Breast epithelium (tissue), 4 donors: ENCODE measurements at regions of chr2 and their contacts with region 1.

Region 1: GRCh38 chr2:239199041-239199768 is 201.6 kb downstream of the HDAC4 start:
- DNase-seq: peak in 1 of 2 donors; percentile 30
- H3K4me3 ChIP-seq: no peak overlapping the region
- H3K27ac ChIP-seq: no peak overlapping the region
- H3K4me1 ChIP-seq: no peaks in the 10 kb centered on the region
- H3K27me3 ChIP-seq: no peaks in the 10 kb centered on the region
- CTCF ChIP-seq: no peak
- POLR2A ChIP-seq: no peak

Region 2: DNA sequence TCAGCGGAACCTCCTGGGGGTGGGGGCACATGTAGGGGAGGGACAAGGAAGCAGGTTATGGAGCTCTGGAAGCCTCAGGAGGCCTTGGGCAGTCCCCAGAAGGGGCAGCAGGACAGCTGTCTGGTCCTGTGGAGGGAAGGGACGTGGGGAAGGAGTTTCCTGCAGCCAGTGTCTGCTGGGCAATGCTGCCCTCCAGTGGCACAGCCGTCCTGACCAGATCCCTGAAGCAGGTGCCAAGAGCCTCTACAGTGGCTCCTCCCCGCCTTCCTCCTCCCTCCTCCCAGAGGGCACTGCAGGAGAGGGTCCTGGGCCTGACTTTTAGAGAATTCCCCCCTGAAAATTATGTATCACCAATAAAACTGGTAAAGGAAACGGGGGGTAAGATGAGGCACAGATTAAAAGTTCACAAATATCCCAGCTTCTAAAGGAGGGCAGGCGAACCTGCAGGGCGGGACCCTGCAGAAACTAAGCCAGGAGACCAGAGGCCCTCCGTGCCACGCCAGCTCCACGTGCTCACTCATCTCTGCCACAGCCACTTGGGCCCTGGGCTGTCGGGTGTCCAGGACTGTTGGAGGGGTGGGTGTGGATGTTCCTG is 92.8 kb before region 1 on chr2:
- intact Hi-C with region 1: loop called (anchors 5 kb)
- DNase-seq: no peak
- H3K4me3 ChIP-seq: no peak overlapping the region
- H3K27ac ChIP-seq: no peak overlapping the region
- H3K4me1 ChIP-seq: no peaks in the 10 kb centered on the region
- H3K27me3 ChIP-seq: no peaks in the 10 kb centered on the region
- CTCF ChIP-seq: no peak
- POLR2A ChIP-seq: no peak

Region 3: DNA sequence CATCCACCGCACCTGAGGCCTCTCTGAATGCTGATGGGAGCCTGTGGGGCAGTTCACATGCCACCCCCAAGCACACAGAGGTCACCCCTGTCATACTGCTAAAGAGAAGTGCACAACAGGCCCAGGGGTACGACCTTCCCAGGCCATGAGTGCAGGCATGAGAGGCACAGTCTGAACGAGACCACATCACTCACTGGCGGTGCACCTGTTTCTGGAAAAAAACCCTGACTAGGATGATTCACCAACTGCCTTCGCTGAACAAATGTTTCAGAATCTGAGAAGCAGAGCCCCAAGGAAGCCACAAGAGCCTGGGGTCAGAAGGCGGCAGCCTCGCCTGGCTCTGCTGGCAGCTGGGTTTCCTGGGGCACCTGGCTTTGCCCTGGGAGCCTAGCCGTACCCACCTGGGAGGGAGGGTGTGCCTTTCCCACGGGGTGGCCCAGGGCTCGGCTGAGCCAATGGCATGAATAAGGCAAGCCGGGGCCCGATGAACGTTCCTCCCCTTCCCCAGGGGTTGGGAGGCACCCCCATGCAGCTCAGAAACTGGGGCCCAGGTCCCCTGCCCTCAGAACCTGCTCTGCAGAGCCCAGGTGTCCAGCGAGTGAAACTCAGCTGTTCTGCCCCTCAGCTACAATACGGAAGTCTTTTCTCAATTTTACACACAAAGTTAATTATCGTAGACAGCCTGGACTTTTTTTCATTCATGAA is 127.8 kb after region 1 on chr2:
- intact Hi-C with region 1: no loop called
- DNase-seq: no peak
- H3K4me3 ChIP-seq: no peak overlapping the region
- H3K27ac ChIP-seq: peak overlapping the region; percentile 61 to 80
- H3K4me1 ChIP-seq: peaks cover 0 to 13% of the 10 kb centered on the region in 2 donors
- H3K27me3 ChIP-seq: no peaks in the 10 kb centered on the region
- CTCF ChIP-seq: no peak
- POLR2A ChIP-seq: no peak